T-cell (primary cell): ENCODE measurements at regions of chr6 and their contacts with region 1.

Region 1: GRCh38 chr6:43096451-43097097 is 20.5 kb downstream of the PTK7 start:
- DNase-seq: no peak
- ATAC-seq: no peak
- H3K4me3 ChIP-seq: no peak overlapping the region
- H3K4me3 Mint-ChIP-seq: no peak overlapping the region
- H3K27ac ChIP-seq: no peak overlapping the region
- H3K27ac Mint-ChIP-seq: no peak overlapping the region
- H3K4me1 ChIP-seq: no peaks in the 10 kb centered on the region
- H3K4me1 Mint-ChIP-seq: peaks cover 14 to 19% (median 17%) of the 10 kb centered on the region in 3 donors
- H3K27me3 ChIP-seq: peaks cover 0 to 2% of the 10 kb centered on the region in 2 experiments
- H3K27me3 Mint-ChIP-seq: peaks cover 0 to 2% of the 10 kb centered on the region in 2 donors

Region 2: DNA sequence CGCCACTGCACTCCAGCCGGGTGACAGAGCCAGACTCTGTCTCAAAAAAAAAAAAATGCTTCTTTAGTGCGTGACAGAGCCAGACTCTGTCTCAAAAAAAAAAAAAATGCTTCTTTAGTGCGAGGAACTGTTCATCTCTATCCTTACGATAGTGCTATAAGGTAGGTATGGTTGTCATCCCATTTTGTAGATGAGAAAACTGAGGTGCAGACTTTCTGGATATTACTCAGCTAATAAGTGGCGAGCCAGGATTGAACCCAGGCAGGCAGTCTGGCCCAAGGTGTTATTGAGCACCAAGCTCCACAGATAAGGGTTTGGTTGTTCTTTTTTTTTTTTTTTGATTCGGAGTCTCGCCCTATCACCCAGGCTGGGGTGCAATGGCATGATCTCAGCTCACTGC is 94.7 kb before region 1 on chr6:
- CTCF ChIA-PET with region 1: no interaction called
- POLR2A ChIA-PET with region 1: interaction called in 1 of 2 experiments, 10 read pairs
- DNase-seq: no peak
- ATAC-seq: no peak
- H3K4me3 ChIP-seq: no peak overlapping the region
- H3K4me3 Mint-ChIP-seq: no peak overlapping the region
- H3K27ac ChIP-seq: no peak overlapping the region
- H3K27ac Mint-ChIP-seq: no peak overlapping the region
- H3K4me1 ChIP-seq: no peaks in the 10 kb centered on the region
- H3K4me1 Mint-ChIP-seq: peaks cover 0 to 2% (median 0%) of the 10 kb centered on the region in 3 donors
- H3K27me3 ChIP-seq: no peaks in the 10 kb centered on the region
- H3K27me3 Mint-ChIP-seq: no peaks in the 10 kb centered on the region

Region 3: DNA sequence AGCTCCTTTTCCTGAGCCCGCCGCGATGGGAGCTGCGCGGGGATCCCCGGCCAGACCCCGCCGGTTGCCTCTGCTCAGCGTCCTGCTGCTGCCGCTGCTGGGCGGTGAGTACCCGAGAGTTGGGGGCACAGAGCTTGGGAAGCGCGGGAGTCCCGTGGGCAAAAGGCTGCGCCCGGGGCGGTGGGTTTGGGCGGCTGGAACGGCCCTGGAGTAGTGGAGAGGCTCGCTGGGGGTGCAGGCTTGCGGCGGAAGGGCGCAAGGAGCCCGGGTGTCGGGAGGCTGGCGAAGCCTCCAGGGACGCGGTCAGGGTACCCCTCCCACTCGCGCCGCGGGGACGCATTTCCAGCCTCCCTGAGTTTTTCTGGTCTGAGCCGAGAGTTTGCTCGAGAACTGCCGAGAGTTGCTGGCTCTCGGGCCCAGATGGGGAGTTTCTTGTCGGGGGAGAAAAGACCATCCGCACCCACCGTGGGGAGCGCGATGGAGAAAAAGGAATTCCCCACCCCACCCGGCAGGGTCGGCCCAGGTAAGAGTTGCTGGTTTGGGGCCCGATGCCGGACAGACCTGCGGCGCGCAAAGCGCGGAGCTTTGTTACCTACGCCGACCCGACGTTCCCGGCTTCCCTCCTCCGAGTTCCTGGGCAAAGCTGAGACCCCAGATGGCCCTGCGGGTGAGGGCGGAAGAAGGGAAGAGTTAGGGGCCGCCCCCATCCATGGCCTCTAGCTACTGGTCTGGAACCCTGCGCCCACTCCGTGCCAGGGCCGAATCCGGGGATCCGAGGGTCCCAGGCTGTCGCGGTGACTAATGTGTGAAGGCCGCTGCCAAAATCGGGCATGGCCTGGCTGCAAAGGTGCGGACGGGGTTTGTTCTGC is 19.9 kb before region 1 on chr6:
- CTCF ChIA-PET with region 1: no interaction called
- POLR2A ChIA-PET with region 1: interaction called in 1 of 2 experiments, 10 read pairs
- DNase-seq: peak in 1 of 35 experiments; percentile 23
- ATAC-seq: peak in 3 of 4 experiments; percentile 14 to 25 (median 22)
- H3K4me3 ChIP-seq: peak overlapping the region; percentile 34 to 89
- H3K4me3 Mint-ChIP-seq: peak overlapping the region; percentile 49 to 65 (median 59)
- H3K27ac ChIP-seq: no peak overlapping the region
- H3K27ac Mint-ChIP-seq: no peak overlapping the region
- H3K4me1 ChIP-seq: peaks cover 0 to 23% of the 10 kb centered on the region in 2 experiments
- H3K4me1 Mint-ChIP-seq: peaks cover 0 to 15% (median 6%) of the 10 kb centered on the region in 3 donors
- H3K27me3 ChIP-seq: peaks cover 0 to 38% of the 10 kb centered on the region in 2 experiments
- H3K27me3 Mint-ChIP-seq: peaks cover 10 to 31% of the 10 kb centered on the region in 2 donors